ENCODE measurements at regions of chr2 and their contacts with region 1.

Region 1: GRCh38 chr2:201194097-201194496 is 11.2 kb downstream of the CASP10 start:
- DNase-seq: peak; percentile 65
- H3K4me3 Mint-ChIP-seq: peak overlapping the region; percentile 73
- H3K27ac Mint-ChIP-seq: peak overlapping the region; percentile 52
- H3K4me1 Mint-ChIP-seq: peaks cover 44% of the 10 kb centered on the region
- H3K27me3 Mint-ChIP-seq: no peaks in the 10 kb centered on the region

Region 2: DNA sequence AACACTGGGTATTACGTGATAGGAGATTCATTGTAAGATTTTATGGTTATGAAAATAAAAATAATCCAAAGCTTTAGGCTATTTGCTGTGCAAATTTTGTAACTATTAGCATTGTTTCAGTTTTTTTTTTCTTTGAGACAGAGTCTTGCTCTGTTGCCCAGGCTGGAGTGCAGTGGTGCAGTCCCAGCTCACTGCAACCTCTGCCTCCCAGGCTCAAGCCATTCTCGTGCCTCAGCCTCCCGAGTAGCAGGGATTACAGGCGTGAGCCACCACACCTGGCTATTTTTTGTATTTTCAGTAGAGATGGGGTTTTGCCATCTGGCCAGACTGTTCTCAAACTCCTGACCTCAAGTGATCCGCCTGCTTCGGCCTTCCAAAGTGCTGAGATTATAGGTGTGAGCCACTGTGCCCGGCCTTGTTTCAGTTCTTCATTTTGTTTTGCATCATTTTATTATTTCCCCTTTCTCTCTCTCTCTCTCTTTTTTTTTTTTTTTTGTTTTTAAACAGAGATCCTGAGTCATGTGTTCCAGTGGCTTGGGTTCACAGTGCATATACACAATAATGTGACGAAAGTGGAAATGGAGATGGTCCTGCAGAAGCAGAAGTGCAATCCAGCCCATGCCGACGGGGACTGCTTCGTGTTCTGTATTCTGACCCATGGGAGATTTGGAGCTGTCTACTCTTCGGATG is 14.6 kb after region 1 on chr2:
- intact Hi-C with region 1: loop called (anchors 1 kb)
- DNase-seq: no peak
- H3K4me3 Mint-ChIP-seq: no peak overlapping the region
- H3K27ac Mint-ChIP-seq: no peak overlapping the region
- H3K4me1 Mint-ChIP-seq: peaks cover 21% of the 10 kb centered on the region
- H3K27me3 Mint-ChIP-seq: no peaks in the 10 kb centered on the region

Measured in activated CD4-positive, alpha-beta T cell treated with anti-CD3 and anti-CD28 coated beads, Interleukin-2, amount 10 ng/mL, durations not matched to agents 24 days and 14 days (primary cell).